PC-3 (cell line): ENCODE measurements at regions of chr1 and their contacts with region 1.

Region 1: DNA sequence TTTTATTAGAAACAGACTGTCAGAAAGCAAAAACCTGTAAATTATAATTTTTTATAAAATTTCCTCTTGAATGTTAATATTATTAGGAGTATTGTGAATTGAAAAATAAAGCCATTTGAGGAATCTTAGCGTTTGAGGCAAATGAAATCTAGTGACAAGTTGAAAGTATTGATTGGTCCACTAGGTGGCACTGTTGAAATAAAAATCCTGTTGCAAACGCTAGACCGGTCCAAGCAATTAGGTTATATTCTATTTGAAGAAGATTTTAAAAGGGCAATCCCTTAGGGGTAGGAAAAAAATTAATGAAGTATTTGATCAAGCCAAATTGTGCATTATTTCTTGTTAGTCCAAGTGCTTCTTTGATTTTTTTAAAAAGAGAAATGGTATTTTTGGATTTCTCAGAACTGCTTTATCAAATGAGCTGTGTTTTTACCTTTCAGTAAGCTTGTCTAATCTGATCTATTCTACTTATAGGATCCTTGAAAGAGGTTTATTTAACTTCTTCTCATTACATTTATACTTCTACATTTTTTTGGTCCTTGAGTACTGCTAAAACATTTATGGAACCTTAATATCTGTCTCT is 57.7 kb downstream of the ATG4C start:
- DNase-seq: peak; percentile 72
- ATAC-seq: peak; percentile 77
- H3K4me3 ChIP-seq: no peak overlapping the region
- H3K27ac ChIP-seq: no peak overlapping the region
- H3K4me1 ChIP-seq: no peaks in the 10 kb centered on the region
- H3K27me3 ChIP-seq: no peaks in the 10 kb centered on the region
- CTCF ChIP-seq: peak; percentile 80

Region 2: GRCh38 chr1:62906428-62906886 is 64.8 kb after region 1 on chr1:
- CTCF ChIA-PET with region 1: interaction called, 4 read pairs
- POLR2A ChIA-PET with region 1: no interaction called
- intact Hi-C with region 1: loop called (anchors 5 kb)
- DNase-seq: peak; percentile 7
- ATAC-seq: peak; percentile 24; the same call in 1 of the 2 replicates
- H3K4me3 ChIP-seq: no peak overlapping the region
- H3K27ac ChIP-seq: no peak overlapping the region
- H3K4me1 ChIP-seq: no peaks in the 10 kb centered on the region
- H3K27me3 ChIP-seq: peaks cover 3% of the 10 kb centered on the region; the same call in 1 of the 2 replicates
- CTCF ChIP-seq: peak; percentile 65

Region 3: DNA sequence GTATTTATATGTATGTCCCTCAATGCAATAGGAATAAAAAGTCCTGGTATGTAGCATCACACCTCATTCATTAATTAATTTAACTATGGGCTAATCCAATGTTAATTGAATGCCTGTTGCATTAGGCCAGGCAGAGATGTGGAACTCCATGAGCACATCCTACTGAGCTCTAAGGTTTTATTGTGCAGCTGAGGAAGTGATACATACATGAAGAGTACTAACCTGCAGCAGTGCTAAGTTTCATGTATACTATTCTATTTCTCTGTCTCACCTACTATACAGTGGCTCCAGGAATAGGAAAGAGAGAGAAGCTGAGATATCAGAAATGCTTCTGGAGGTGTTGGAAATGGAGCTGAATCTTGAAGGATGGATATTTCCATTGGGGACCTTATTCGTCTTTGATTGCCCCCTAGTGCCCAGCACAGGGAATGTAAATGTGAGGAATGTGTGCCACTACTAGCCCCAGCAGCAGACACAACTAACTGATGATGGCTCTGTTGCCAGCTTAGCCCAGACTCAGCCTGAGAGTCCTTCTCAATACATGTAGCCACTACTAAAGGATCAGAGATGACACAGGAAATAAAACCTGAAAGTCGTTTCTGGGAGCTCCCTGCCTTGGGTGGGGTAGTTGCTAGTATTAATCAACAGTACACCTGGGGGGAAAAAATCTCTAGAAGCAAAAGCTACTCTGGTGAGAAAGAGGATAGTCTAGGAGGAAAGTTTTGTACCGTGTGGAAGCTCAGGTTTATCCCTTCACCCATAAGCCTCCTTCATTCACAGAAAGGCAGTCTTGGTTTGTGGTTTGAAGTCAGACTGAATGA is 307.4 kb after region 1 on chr1:
- CTCF ChIA-PET with region 1: interaction called, 4 read pairs
- POLR2A ChIA-PET with region 1: no interaction called
- intact Hi-C with region 1: loop called (anchors 1 kb)
- DNase-seq: peak; percentile 61
- ATAC-seq: peak; percentile 82
- H3K4me3 ChIP-seq: no peak overlapping the region
- H3K27ac ChIP-seq: no peak overlapping the region
- H3K4me1 ChIP-seq: no peaks in the 10 kb centered on the region
- H3K27me3 ChIP-seq: peaks cover 46% of the 10 kb centered on the region
- CTCF ChIP-seq: peak; percentile 77

Region 4: GRCh38 chr1:63442141-63442475 is 600.4 kb after region 1 on chr1:
- CTCF ChIA-PET with region 1: no interaction called
- POLR2A ChIA-PET with region 1: no interaction called
- intact Hi-C with region 1: loop called (anchors 1 kb)
- DNase-seq: peak; percentile 28
- ATAC-seq: peak; percentile 39
- H3K4me3 ChIP-seq: no peak overlapping the region
- H3K27ac ChIP-seq: no peak overlapping the region
- H3K4me1 ChIP-seq: no peaks in the 10 kb centered on the region
- H3K27me3 ChIP-seq: no peaks in the 10 kb centered on the region
- CTCF ChIP-seq: no peak

Region 5: GRCh38 chr1:63537940-63538339 is 696.3 kb after region 1 on chr1:
- CTCF ChIA-PET with region 1: interaction called, 3 read pairs
- POLR2A ChIA-PET with region 1: no interaction called
- intact Hi-C with region 1: loop called (anchors 5 kb)
- DNase-seq: peak; percentile 38
- ATAC-seq: no peak
- H3K4me3 ChIP-seq: no peak overlapping the region
- H3K27ac ChIP-seq: no peak overlapping the region
- H3K4me1 ChIP-seq: no peaks in the 10 kb centered on the region
- H3K27me3 ChIP-seq: no peaks in the 10 kb centered on the region
- CTCF ChIP-seq: peak; percentile 72